Activated naive CD4-positive, alpha-beta T cell treated with anti-CD3 and anti-CD28 coated beads, Interleukin-2, amount 10 ng/mL, durations not matched to agents 7 days and 5 days (primary cell): ENCODE measurements at regions of chr4 and their contacts with region 1.

Region 1: DNA sequence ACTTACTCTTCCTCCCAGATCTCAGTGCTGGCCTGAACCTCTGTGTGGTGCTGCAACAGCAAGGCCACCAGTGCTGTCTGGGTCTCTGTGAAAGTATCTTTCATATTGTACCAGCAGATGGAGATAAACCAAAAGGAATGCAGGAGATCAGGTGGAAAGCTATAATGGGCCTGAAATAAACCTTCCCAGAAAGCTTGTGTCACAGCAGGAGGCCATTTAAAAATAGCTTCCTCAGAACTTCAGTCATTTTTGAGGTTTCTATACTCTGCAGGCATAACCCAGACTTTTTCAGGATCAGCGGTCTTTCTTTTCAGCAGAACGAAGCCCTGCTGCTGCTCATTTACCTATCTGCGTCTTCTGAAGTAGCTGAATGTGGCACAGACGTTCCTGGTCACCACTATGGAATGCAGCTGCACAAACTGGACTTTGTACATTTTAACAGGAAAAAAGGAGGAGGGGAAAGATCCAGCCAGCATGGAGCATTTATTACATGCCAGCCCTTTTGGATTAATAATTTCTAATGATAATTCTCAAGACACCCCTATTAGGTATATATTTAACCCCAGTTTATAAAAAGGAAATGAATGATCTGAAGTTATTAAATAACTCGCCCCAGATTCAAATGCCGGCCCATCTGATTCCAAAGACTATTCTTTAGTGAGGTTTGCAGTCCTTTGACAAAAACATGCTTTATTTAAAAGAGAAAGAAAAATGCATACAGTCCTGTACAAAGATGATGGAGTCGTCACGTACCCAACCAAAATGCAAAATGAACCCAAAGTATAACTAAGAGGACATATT is 119.7 kb downstream of the NFKB1 start:
- DNase-seq: no peak
- H3K4me3 Mint-ChIP-seq: no peak overlapping the region
- H3K27ac Mint-ChIP-seq: no peak overlapping the region
- H3K4me1 Mint-ChIP-seq: peaks cover 63% of the 10 kb centered on the region
- H3K27me3 Mint-ChIP-seq: peaks cover 5% of the 10 kb centered on the region

Region 2: GRCh38 chr4:102430461-102430910 is 190.4 kb before region 1 on chr4:
- CTCF ChIA-PET with region 1: interaction called, 36 read pairs
- DNase-seq: no peak
- H3K4me3 Mint-ChIP-seq: peak overlapping the region; percentile 88
- H3K27ac Mint-ChIP-seq: peak overlapping the region; percentile 84
- H3K4me1 Mint-ChIP-seq: peaks cover 15% of the 10 kb centered on the region
- H3K27me3 Mint-ChIP-seq: peaks cover 10% of the 10 kb centered on the region

Region 3: DNA sequence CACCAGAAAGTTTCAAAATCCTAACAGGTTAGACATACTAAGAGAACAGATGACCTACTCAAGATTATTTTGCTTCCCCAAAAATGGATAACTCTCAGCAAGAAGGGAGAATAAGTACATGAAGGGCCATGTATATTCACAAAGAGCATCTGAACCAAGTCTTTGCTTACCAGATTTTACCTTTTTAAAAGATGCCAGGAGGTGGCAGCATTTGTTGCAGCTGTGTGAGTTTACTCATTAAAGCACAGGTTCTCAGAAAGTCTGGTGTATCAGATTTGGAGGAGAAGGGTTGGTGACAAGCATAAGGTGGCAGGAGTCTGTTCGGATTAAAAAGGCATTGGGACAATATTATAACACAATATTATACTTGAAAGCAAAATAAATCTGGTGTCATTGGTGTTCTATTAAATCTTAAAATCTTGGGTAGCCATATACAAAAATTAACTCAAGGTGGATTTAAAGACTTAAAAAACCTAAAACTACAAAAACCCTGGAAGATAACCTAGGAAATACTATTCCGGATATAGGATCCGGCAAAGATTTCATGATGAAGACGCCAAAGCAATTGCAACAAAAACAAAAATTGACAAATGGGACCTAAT is 171.0 kb before region 1 on chr4:
- CTCF ChIA-PET with region 1: interaction called, 21 read pairs
- DNase-seq: peak; percentile 69
- H3K4me3 Mint-ChIP-seq: no peak overlapping the region
- H3K27ac Mint-ChIP-seq: no peak overlapping the region
- H3K4me1 Mint-ChIP-seq: peaks cover 33% of the 10 kb centered on the region
- H3K27me3 Mint-ChIP-seq: no peaks in the 10 kb centered on the region

Region 4: GRCh38 chr4:102578819-102579218 is 42.1 kb before region 1 on chr4:
- CTCF ChIA-PET with region 1: interaction called, 20 read pairs
- DNase-seq: peak; percentile 39
- H3K4me3 Mint-ChIP-seq: no peak overlapping the region
- H3K27ac Mint-ChIP-seq: peak overlapping the region; percentile 39
- H3K4me1 Mint-ChIP-seq: peaks cover 77% of the 10 kb centered on the region
- H3K27me3 Mint-ChIP-seq: no peaks in the 10 kb centered on the region

Region 5: DNA sequence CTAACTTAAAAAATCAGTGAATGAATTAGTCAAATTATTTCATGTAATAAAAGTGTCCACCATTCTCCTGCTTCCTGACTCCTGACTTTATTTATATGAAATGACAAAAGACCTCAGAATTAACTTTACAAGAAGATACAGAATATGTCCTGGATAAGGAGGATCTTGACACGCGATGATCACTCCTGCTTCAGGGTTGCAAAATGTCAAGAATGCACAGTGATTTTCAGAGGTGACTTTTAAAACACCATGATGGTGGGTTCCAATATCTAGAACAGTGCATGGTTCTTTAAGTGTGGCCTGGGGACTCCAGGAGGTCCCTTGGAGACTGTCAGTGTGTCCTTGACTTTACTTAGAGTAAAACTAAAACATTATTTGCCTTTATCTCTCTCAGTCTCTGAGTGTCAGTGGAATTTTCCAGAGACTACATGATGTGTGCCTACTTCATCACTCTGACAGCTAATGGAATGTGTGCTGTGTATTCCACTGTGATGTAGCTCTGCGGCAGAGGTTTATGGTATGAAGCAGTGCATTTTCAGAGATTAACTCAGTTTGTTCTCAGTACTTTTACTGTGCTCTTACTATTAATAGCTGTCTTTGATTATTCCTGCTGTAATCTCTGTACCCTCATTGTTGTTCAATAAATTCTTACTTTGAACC is 54.1 kb after region 1 on chr4:
- CTCF ChIA-PET with region 1: no interaction called
- DNase-seq: no peak
- H3K4me3 Mint-ChIP-seq: no peak overlapping the region
- H3K27ac Mint-ChIP-seq: no peak overlapping the region
- H3K4me1 Mint-ChIP-seq: no peaks in the 10 kb centered on the region
- H3K27me3 Mint-ChIP-seq: no peaks in the 10 kb centered on the region

Region 6: GRCh38 chr4:103008875-103009729 is 388.2 kb after region 1 on chr4:
- CTCF ChIA-PET with region 1: interaction called, 21 read pairs
- DNase-seq: peak; percentile 37
- H3K4me3 Mint-ChIP-seq: no peak overlapping the region
- H3K27ac Mint-ChIP-seq: no peak overlapping the region
- H3K4me1 Mint-ChIP-seq: no peaks in the 10 kb centered on the region
- H3K27me3 Mint-ChIP-seq: no peaks in the 10 kb centered on the region

Region 7: DNA sequence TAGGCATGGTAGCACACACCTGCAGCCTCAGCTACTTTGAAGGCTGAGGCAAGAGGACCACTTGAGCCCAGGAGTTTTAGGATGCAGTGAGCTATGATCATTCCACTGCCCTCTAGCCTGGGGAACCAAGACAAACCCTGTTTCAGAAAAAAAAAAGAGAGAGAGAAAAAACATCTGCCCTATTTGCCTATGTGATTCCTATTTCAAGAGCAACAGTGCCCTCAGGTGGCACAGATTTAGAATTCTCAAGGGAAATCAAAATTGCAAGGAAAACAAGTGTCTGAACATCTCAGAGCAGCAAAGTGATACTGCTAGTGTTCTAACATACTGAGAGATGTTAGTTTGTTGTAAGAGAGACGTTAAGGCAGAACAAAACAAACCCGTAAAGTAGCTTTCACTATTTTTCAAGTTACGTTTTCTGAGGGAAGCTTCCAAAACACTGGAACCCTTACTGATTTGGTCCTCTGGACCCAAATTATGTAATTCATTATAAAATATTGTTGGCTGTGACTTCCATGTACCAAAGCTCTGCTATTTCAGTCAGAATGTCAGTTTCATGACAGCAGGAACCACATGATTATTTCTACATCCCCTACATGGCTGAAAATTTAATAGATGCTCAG is 470.8 kb after region 1 on chr4:
- CTCF ChIA-PET with region 1: interaction called, 12 read pairs
- DNase-seq: peak; percentile 65
- H3K4me3 Mint-ChIP-seq: no peak overlapping the region
- H3K27ac Mint-ChIP-seq: peak overlapping the region; percentile 81
- H3K4me1 Mint-ChIP-seq: peaks cover 23% of the 10 kb centered on the region
- H3K27me3 Mint-ChIP-seq: no peaks in the 10 kb centered on the region

Region 8: GRCh38 chr4:103204111-103204510 is 583.2 kb after region 1 on chr4:
- CTCF ChIA-PET with region 1: no interaction called
- DNase-seq: no peak
- H3K4me3 Mint-ChIP-seq: no peak overlapping the region
- H3K27ac Mint-ChIP-seq: no peak overlapping the region
- H3K4me1 Mint-ChIP-seq: no peaks in the 10 kb centered on the region
- H3K27me3 Mint-ChIP-seq: peaks cover 23% of the 10 kb centered on the region